HepG2 (cell line): ENCODE measurements at regions of chr5 and their contacts with region 1.

Region 1: GRCh38 chr5:74810915-74811314 is 43.9 kb downstream of the NSA2 start:
- DNase-seq: no peak
- ATAC-seq: no peak
- H3K4me3 ChIP-seq: no peak overlapping the region
- H3K27ac ChIP-seq: no peak overlapping the region
- H3K4me1 ChIP-seq: peaks cover 5% of the 10 kb centered on the region; the same call in 1 of the 2 replicates
- H3K27me3 ChIP-seq: no peaks in the 10 kb centered on the region
- CTCF ChIP-seq: no peak
- EP300 ChIP-seq: no peak
- POLR2A ChIP-seq: no peak
- RAD21 ChIP-seq: no peak

Region 2: GRCh38 chr5:74903165-74903787 is 92.4 kb after region 1 on chr5:
- CTCF ChIA-PET with region 1: no interaction called
- POLR2A ChIA-PET with region 1: no interaction called
- in situ Hi-C with region 1: no loop called
- intact Hi-C with region 1: loop called (anchors 5 kb)
- DNase-seq: peak; percentile 66
- ATAC-seq: peak; percentile 100
- H3K4me3 ChIP-seq: no peak overlapping the region
- H3K27ac ChIP-seq: no peak overlapping the region
- H3K4me1 ChIP-seq: peaks cover 6% of the 10 kb centered on the region; the same call in 1 of the 2 replicates
- H3K27me3 ChIP-seq: no peaks in the 10 kb centered on the region
- CTCF ChIP-seq: peak; percentile 95
- EP300 ChIP-seq: no peak
- POLR2A ChIP-seq: no peak
- RAD21 ChIP-seq: peak; percentile 95